Astrocyte of the cerebellum (primary cell): ENCODE measurements at regions of chr9 and their contacts with region 1.

Region 1: DNA sequence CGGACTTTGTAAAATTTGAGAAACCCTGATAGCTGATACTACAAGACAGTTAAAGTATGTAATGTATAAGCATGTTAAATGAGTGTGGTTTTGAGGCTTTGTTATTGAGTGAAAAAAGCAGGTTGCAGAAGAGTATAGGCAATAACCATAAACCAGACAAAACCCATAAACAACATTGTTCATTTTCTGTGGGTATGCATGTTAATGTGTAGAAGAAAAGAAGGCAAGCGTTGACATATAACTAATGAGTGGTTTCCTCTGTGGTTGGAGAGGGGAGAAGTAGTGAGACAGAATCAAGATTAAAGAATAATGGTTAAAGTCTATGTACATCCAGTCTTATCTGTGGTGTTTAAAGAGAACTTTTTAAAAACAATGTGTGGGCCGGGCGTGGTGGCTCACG is 26.2 kb downstream of the RAD23B start:
- DNase-seq: peak; percentile 65
- H3K4me3 ChIP-seq: no peak overlapping the region
- CTCF ChIP-seq: no peak

Region 2: DNA sequence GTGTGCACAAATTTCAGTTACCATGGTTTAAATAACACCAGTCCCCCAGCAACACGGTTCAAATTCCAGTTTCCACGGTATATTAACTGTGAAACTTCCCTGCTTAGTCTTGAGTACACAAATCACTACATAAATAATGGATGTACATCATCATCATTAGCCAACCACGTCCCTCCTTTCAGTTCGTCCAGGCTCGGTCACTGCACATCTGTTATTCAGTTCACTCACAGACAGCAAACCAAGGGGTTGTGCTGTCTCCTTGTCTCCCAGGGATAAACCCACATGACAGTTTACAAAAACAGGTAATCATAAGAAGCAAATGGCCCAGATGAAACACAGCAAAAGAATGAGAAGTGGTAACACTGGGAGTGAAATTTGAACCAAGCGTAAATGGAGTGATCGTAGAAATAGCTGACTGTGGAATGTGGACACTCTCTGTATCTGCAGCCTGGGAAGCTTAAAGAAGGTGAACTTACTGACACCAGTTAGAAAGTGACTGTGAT is 87.2 kb before region 1 on chr9:
- in situ Hi-C with region 1: loop called (anchors 5 kb)
- DNase-seq: peak; percentile 13
- H3K4me3 ChIP-seq: peak overlapping the region; percentile 25
- CTCF ChIP-seq: no peak